WTC11 (cell line): ENCODE measurements at regions of chr3 and their contacts with region 1.

Region 1: GRCh38 chr3:139561959-139562676 is 22.6 kb upstream of the RBP1 start:
- DNase-seq: peak; percentile 72
- ATAC-seq: peak; percentile 83
- H3K4me3 Mint-ChIP-seq: no peak overlapping the region
- H3K27ac Mint-ChIP-seq: no peak overlapping the region
- H3K4me1 Mint-ChIP-seq: peaks cover 8% of the 10 kb centered on the region
- H3K27me3 Mint-ChIP-seq: no peaks in the 10 kb centered on the region
- CTCF ChIP-seq: peak; percentile 74

Region 2: GRCh38 chr3:139427283-139427993 is 134.7 kb before region 1 on chr3:
- CTCF ChIA-PET with region 1: interaction called, 18 read pairs
- POLR2A ChIA-PET with region 1: no interaction called
- DNase-seq: no peak
- ATAC-seq: peak; percentile 67
- H3K4me3 Mint-ChIP-seq: no peak overlapping the region
- H3K27ac Mint-ChIP-seq: no peak overlapping the region
- H3K4me1 Mint-ChIP-seq: peaks cover 4% of the 10 kb centered on the region; the same call in 1 of the 2 replicates
- H3K27me3 Mint-ChIP-seq: no peaks in the 10 kb centered on the region
- CTCF ChIP-seq: peak; percentile 73